Activated CD4-positive, alpha-beta T cell treated with anti-CD3 and anti-CD28 coated beads, Interleukin-2, amount 10 ng/mL, durations not matched to agents 24 days and 14 days (primary cell): ENCODE measurements at regions of chrX and their contacts with region 1.

Region 1: GRCh38 chrX:30735839-30736238 is 82.6 kb downstream of the GK start:
- DNase-seq: peak; percentile 92
- H3K4me3 Mint-ChIP-seq: no peak overlapping the region
- H3K27ac Mint-ChIP-seq: no peak overlapping the region
- H3K4me1 Mint-ChIP-seq: peaks cover 7% of the 10 kb centered on the region
- H3K27me3 Mint-ChIP-seq: no peaks in the 10 kb centered on the region

Region 2: GRCh38 chrX:30822068-30822681 is 86.3 kb after region 1 on chrX:
- intact Hi-C with region 1: loop called (anchors 5 kb)
- DNase-seq: no peak
- H3K4me3 Mint-ChIP-seq: no peak overlapping the region
- H3K27ac Mint-ChIP-seq: no peak overlapping the region
- H3K4me1 Mint-ChIP-seq: peaks cover 16% of the 10 kb centered on the region
- H3K27me3 Mint-ChIP-seq: peaks cover 2% of the 10 kb centered on the region

Region 3: DNA sequence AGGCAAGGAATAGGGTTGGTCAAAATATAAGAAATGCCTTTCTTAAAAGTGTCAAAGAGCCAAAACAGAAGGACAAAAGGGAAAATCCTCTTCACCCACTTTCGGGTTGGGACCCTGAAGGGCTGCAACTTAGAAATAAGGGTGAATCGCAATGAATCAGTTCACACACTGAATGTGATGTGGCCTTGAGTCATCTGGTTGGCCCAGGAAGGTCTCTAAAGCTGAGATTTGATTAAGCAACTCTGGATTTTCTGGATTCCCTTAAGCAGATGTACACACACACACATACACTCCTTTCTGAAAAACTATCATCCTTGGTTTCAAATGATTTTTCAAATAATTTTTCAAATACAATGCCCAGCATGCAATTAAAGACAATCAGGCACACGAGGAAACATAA is 140.1 kb after region 1 on chrX:
- intact Hi-C with region 1: no loop called
- DNase-seq: no peak
- H3K4me3 Mint-ChIP-seq: no peak overlapping the region
- H3K27ac Mint-ChIP-seq: no peak overlapping the region
- H3K4me1 Mint-ChIP-seq: peaks cover 16% of the 10 kb centered on the region
- H3K27me3 Mint-ChIP-seq: no peaks in the 10 kb centered on the region

Region 4: DNA sequence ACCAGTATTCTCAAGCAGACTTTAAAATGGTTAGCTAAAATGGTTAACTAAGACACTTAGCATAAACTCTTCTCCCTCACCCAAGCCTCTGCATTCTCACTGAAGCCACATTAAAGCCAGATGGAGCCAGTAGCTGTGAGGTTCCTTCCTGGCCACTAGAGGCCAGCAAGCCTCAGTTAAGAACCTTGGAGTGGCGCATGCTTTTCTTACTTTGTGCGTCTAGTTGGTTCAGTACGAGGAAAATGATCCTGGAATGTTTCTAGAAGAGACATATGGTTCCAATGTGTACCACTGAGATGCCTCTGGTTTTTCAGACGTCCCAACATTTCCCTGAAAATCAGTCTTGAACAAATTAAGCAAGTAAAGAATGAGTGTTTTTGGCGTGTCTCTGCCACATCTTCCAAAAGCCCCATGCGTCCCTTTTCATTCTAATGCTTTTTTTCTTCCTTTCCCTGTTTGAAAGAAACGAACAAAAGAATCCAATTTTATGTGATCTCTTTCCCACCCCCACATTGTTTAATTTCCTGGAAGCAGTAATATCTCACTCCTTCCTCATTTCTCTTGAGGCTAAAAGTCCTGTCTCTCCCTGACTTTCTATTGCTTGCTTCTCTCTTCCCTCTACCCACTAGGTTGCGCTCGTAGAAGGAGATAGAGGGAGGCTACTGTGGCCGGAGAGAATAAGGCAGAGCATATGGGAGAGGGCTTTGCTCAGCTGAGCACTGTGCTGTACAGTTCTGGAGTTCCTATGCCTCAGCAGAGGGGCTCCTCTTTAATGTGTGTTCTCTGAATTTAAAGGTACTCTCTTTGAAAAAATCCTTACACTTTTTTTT is 236.2 kb after region 1 on chrX:
- intact Hi-C with region 1: loop called (anchors 1 kb)
- DNase-seq: peak; percentile 72
- H3K4me3 Mint-ChIP-seq: peak overlapping the region; percentile 80
- H3K27ac Mint-ChIP-seq: peak overlapping the region; percentile 45
- H3K4me1 Mint-ChIP-seq: peaks cover 15% of the 10 kb centered on the region
- H3K27me3 Mint-ChIP-seq: peaks cover 8% of the 10 kb centered on the region